Gastrocnemius medialis (tissue), 4 donors: ENCODE measurements at regions of chr1 and their contacts with region 1.

Region 1: GRCh38 chr1:150149271-150150132 is at the start of gene PLEKHO1:
- DNase-seq: peak; percentile 76 to 86
- ATAC-seq: peak; percentile 75 to 78
- H3K4me3 ChIP-seq: peak within 1 kb of the TSS; percentile 84 to 91 (median 86)
- H3K27ac ChIP-seq: peak within 1 kb of the TSS; percentile 90 to 94 (median 90)
- H3K4me1 ChIP-seq: peaks cover 24 to 50% of the 10 kb centered on the region in 2 donors
- H3K27me3 ChIP-seq: no peaks in the 10 kb centered on the region
- CTCF ChIP-seq: no peak
- POLR2A ChIP-seq: peak; percentile 94
- total RNA-seq, gene PLEKHO1: 24.3 to 57.7 (median 40.4) TPM

Region 2: GRCh38 chr1:150213170-150214098 is 63.9 kb after region 1 on chr1:
- in situ Hi-C with region 1: no loop called
- intact Hi-C with region 1: loop called (anchors 1 kb)
- DNase-seq: peak; percentile 93 to 97
- ATAC-seq: peak; percentile 99 to 100
- H3K4me3 ChIP-seq: peak overlapping the region; percentile 59 to 68 (median 67)
- H3K27ac ChIP-seq: peak overlapping the region; percentile 75 to 88 (median 86)
- H3K4me1 ChIP-seq: peaks cover 5 to 10% of the 10 kb centered on the region in 2 donors
- H3K27me3 ChIP-seq: no peaks in the 10 kb centered on the region
- CTCF ChIP-seq: peak in 2 of 5 experiments; percentile 13 to 26
- POLR2A ChIP-seq: peak; percentile 18 to 49

Region 3: DNA sequence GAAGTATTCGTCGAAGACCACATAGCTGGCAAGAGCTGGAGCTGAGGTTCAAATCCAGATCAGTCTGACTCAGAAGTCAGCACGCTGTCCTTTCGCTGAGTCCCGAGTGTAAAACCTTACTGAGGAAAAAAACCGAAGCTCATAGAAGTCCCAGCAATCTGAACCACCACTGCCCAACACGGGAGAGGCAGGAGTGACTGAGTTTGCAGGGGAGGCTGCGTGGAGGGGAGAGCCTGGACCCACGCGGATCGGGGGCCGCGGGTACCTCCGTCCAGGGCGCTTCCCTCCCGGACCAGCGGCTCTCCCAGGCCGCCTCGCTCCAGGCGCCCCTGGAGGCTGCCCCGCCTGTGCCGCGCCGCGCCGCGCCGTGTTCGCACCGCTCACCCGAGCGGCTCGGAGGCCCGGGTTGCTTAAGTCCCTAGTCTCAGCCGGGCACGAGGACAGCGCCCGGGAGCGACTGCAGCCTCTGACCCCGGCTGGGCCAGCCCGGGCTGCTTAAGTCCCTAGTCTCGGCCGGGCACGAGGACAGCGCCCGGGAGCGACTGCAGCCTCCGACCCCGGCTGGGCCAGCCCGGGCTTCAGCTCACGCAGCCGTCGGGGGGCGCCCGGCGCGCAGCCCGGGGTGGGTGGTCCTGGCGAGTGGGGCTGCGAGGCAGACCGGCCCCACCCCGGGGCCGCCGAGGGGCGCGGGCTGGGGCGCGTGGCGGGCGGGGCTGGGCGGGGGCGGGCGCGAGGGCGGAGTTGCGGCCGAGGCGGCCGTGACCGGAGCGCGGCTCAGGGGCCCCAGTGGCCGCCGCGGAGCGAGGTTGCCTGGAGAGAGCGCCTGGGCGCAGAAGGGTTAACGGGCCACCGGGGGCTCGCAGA is 399.4 kb after region 1 on chr1 and contains the start of gene ADAMTSL4:
- in situ Hi-C with region 1: no loop called
- intact Hi-C with region 1: no loop called
- DNase-seq: peak in 1 of 2 donors; percentile 74
- ATAC-seq: peak; percentile 57 to 69
- H3K4me3 ChIP-seq: peak within 1 kb of the TSS; percentile 62 to 92 (median 70)
- H3K27ac ChIP-seq: peak within 1 kb of the TSS; percentile 81 to 92 (median 90)
- H3K4me1 ChIP-seq: peaks cover 28 to 35% of the 10 kb centered on the region in 2 donors
- H3K27me3 ChIP-seq: no peaks in the 10 kb centered on the region
- CTCF ChIP-seq: peak in 4 of 5 experiments; percentile 12 to 39 (median 22)
- POLR2A ChIP-seq: peak in 1 of 2 donors; percentile 58
- total RNA-seq, gene ADAMTSL4: 5.6 to 30.0 (median 10.7) TPM